ENCODE measurements at regions of chr2 and their contacts with region 1.

Region 1: DNA sequence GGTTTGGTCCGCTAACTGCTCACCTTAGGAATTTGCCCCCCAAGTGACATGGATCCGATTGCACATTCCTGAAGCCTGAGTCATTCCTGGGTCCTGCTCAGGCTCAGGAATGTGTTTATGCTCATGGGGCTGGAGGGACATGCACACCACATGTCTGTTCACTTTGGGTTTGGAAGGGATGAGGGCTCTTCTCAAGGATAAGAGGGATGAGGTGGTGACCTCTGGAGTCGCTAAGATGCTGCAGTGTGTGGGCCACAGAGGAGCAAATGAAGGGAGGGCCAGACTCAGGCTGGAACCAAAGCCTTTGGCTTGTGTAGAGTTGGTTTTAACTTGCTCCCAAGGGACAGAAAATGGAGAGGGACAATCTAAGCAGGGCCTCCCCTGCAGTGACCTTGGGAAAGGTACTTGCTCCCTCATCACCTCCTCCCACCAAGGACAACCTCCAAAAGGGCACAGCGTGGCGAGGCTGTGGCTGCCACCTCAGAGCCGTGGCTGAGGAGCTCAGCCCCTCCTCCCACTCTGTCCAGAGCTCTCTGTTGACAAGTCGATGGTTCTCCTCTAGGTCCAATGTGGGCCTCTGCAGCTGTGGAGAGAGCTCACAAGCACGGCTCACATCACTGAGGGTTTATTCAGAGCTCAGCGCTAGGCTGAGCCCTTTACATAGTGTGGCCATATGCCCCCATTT is 66.1 kb downstream of the HS1BP3 start:
- DNase-seq: peak; percentile 98
- ATAC-seq: peak; percentile 79
- H3K4me3 ChIP-seq: peak overlapping the region in 1 of 3 experiments; percentile 52; a peak in 2 of 6 replicates
- H3K27ac ChIP-seq: peak overlapping the region; percentile 97
- H3K4me1 ChIP-seq: peaks cover 100% of the 10 kb centered on the region
- H3K27me3 ChIP-seq: no peaks in the 10 kb centered on the region
- CTCF ChIP-seq: peak; percentile 41; the same call in 1 of the 2 replicates
- EP300 ChIP-seq: peak; percentile 63 to 88; a peak in 3 of 4 replicates
- POLR2A ChIP-seq: peak in 1 of 2 experiments; percentile 73; a peak in 1 of 4 replicates
- RAD21 ChIP-seq: peak; percentile 58

Region 2: DNA sequence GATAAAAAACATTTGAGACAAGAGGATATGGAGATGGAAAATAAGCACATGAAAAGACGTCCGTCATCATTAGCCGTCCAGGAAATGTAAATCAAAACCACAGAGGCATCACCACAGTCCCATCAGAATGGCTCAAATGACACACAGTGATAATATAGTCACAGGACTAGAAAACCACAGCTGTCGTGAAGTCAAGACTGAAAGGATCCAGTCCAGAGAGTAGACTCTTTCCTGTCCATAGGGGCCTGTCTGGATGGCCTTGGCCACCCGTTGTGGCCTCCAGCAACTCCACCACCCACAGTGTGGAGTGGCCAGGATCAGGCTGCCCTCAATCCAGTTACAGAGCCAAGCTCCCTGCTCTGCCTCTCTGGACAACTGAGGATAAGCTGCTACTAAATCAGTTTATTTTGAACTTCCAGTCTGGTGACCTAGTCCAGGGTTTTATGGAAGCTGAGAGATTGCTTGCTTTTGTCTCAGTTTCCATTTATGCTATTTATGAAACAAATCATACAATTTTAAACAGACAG is 77.5 kb before region 1 on chr2:
- CTCF ChIA-PET with region 1: no interaction called
- POLR2A ChIA-PET with region 1: interaction called, 19 read pairs
- in situ Hi-C with region 1: no loop called
- intact Hi-C with region 1: no loop called
- DNase-seq: no peak
- ATAC-seq: peak; percentile 55
- H3K4me3 ChIP-seq: no peak overlapping the region
- H3K27ac ChIP-seq: peak overlapping the region; percentile 14
- H3K4me1 ChIP-seq: peaks cover 71% of the 10 kb centered on the region
- H3K27me3 ChIP-seq: no peaks in the 10 kb centered on the region
- CTCF ChIP-seq: no peak
- EP300 ChIP-seq: no peak
- POLR2A ChIP-seq: no peak
- RAD21 ChIP-seq: no peak

Region 3: DNA sequence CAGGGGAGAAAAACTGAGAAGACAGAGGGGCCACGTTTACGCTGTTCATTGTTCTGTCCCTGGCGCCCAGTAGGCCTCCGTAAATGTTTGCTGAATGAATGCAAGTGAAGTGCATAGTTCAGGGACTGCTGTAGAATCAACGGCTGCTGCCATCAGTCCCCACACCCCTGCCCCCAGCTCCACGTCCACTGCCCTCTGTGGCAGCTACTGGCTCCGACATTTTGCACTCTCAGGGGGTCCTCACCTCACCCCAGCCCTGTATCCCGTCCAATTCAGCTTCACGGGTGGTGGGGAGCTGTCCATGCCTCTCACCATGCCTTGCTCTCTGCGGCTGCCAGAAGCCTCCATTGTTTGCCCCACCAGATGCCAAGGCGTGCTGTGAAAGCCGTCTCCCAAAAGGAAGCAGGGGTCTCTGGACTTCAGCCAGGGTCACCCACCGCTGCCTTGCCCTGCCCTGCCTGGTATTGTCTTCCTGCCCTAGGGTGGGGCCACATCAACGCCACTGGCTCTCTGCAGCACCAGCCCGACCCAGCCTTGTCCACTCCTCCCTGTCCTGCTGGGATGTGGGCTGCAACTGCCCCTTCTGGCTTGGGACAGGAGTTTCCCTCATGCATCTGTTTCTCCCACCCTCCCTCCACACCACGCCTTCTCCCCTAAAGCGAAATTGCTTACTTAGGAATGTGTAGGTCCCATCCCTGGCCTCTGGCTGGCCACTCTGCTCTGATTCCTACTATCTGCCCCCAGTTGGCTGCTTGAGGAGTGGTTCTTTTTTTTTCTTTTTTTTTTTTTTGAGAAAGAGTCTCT is 51.9 kb before region 1 on chr2:
- CTCF ChIA-PET with region 1: no interaction called
- POLR2A ChIA-PET with region 1: interaction called, 215 read pairs
- in situ Hi-C with region 1: no loop called
- intact Hi-C with region 1: no loop called
- DNase-seq: peak; percentile 72
- ATAC-seq: peak; percentile 73
- H3K4me3 ChIP-seq: no peak overlapping the region; a peak in 1 of 6 replicates
- H3K27ac ChIP-seq: peak overlapping the region; percentile 59
- H3K4me1 ChIP-seq: peaks cover 88% of the 10 kb centered on the region
- H3K27me3 ChIP-seq: no peaks in the 10 kb centered on the region
- CTCF ChIP-seq: no peak
- EP300 ChIP-seq: peak in 1 of 2 experiments; percentile 78; a peak in 1 of 4 replicates
- POLR2A ChIP-seq: no peak
- RAD21 ChIP-seq: 0 out of 2 replicates have a peak, but pooled peaks have one; percentile 22

Region 4: DNA sequence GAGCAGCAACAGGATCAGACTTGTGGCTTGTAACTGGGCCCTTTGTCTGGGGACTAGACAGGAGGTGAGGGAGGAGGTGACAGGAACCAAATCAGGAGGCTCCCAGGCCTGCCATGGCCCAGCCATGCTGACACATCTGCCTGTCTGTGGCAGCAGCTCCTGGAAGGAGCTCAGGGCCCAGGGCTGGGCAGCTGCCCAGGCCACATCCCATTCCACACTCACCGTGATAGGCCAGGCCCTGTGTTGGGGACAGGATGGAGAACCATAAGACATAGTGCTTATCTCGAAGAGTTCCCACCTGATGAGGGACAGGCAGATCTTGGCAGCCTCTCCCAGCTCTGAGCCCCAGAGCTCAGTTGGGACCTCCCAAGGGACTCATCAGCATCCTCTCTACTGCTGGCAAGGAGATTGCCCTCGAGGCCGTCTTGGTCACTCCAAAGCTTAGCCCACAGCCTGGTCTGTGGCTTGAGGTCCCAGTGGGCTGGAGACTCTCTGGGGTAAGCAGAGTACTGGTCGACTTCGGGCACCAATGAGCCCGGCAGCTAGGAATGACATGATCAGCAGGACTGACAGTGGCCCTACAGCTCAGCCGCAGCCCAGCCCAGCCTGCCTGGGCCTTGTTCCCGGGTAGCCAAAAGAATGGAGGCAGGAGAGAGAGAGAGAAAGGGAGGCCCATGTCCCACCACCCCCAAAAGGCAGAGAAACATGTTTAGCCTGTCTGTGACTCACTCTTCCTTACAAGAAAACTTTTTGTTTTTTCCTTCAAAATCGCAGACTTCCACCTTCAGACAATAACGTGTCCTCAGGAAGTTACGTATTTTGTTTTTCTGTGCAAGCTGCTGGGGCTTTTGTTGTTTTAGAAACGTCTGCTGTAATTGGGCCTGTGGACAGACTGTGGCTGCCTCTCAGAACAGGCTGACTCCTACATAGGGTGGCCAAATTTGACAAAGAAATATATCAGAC is 16.0 kb before region 1 on chr2:
- CTCF ChIA-PET with region 1: no interaction called
- POLR2A ChIA-PET with region 1: interaction called, 409 read pairs
- in situ Hi-C with region 1: no loop called
- intact Hi-C with region 1: no loop called
- DNase-seq: no peak
- ATAC-seq: no peak
- H3K4me3 ChIP-seq: no peak overlapping the region
- H3K27ac ChIP-seq: peak overlapping the region; percentile 49
- H3K4me1 ChIP-seq: peaks cover 96% of the 10 kb centered on the region
- H3K27me3 ChIP-seq: no peaks in the 10 kb centered on the region
- CTCF ChIP-seq: no peak
- EP300 ChIP-seq: no peak
- POLR2A ChIP-seq: no peak
- RAD21 ChIP-seq: no peak

Region 5: DNA sequence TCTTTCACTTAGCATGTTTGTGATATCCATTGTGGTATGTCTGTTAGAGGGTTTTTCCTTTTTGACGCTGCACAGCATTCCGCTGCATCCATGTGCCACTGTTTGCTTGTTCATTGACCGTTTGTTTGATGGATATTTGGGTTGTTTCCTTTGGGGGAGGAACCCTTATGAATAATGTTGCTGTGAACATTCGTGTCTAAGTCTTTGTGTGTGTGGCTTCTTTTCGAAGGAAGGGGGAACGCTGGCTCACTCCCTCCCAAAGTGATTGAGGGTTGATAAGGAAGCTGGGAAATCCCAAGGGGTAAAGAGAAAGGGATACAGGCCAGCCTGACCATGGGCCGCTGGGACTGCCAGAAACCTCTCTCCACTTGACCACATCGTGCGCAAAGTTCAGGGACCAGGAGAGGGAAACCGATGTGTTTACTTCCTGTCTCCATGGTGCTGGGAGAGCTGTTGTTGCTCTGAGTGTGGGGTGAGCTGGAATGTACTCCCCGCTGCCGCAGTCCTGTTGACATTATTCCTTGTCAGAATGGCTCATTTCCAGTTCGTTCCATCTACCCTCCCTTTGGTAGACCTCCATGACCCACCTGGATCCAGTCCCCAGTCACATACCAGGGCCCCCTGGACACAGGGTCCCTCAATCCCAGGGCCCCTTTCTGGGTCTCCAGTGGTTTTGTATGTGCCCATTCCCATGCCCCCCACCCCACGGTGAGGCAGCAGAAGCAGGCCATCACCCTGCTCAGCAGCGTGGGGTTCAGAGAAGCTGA is 26.5 kb after region 1 on chr2:
- CTCF ChIA-PET with region 1: no interaction called
- POLR2A ChIA-PET with region 1: interaction called, 33 read pairs
- in situ Hi-C with region 1: no loop called
- intact Hi-C with region 1: loop called (anchors 1 kb)
- DNase-seq: peak; percentile 100
- ATAC-seq: peak; percentile 94
- H3K4me3 ChIP-seq: peak overlapping the region in 1 of 3 experiments; percentile 35; a peak in 3 of 6 replicates
- H3K27ac ChIP-seq: peak overlapping the region; percentile 95
- H3K4me1 ChIP-seq: peaks cover 78% of the 10 kb centered on the region
- H3K27me3 ChIP-seq: no peaks in the 10 kb centered on the region
- CTCF ChIP-seq: peak; percentile 15; the same call in 1 of the 2 replicates
- EP300 ChIP-seq: peak; percentile 92 to 97
- POLR2A ChIP-seq: peak in 1 of 2 experiments; percentile 81; a peak in 2 of 4 replicates
- RAD21 ChIP-seq: peak; percentile 57

Region 6: DNA sequence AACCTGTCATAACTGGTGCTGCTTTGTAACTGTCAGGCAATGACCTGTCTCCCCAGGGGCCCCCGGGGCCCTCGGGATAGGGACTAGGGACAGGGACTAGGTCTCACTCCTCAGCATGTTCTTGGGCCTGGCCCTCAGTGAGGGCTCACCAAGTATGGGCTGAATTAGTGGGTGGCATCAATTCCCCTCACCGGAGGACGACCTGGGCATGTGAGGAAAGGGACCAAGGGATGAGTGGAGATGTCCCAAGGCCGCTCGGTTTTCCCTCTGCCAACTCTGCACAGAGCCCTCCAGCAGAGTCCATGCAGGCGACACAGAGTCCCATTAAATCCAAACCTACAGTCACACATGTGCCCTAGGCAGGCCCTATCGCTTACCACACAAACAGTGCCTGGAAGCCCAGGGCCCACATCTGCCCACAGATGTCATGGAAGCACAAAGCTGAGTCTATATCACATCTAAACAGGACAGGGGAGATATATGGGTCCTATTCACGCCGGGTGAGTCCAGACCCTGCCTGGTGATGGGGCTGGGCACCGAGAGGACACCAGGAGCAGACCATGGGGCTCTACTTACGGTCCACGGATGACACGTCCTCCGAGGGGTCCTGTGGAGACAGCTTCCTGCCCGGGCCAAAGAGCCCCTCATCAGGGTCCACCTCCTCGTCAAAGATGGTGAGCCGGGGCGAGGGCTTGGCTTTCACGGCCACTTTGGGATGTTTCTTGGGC is 39.5 kb after region 1 on chr2:
- CTCF ChIA-PET with region 1: no interaction called
- POLR2A ChIA-PET with region 1: no interaction called
- in situ Hi-C with region 1: no loop called
- intact Hi-C with region 1: no loop called
- DNase-seq: no peak
- ATAC-seq: no peak
- H3K4me3 ChIP-seq: no peak overlapping the region
- H3K27ac ChIP-seq: no peak overlapping the region
- H3K4me1 ChIP-seq: peaks cover 17% of the 10 kb centered on the region
- H3K27me3 ChIP-seq: no peaks in the 10 kb centered on the region
- CTCF ChIP-seq: no peak
- EP300 ChIP-seq: no peak
- POLR2A ChIP-seq: no peak
- RAD21 ChIP-seq: no peak